ENCODE measurements at regions of chr1 and their contacts with region 1.

Region 1: DNA sequence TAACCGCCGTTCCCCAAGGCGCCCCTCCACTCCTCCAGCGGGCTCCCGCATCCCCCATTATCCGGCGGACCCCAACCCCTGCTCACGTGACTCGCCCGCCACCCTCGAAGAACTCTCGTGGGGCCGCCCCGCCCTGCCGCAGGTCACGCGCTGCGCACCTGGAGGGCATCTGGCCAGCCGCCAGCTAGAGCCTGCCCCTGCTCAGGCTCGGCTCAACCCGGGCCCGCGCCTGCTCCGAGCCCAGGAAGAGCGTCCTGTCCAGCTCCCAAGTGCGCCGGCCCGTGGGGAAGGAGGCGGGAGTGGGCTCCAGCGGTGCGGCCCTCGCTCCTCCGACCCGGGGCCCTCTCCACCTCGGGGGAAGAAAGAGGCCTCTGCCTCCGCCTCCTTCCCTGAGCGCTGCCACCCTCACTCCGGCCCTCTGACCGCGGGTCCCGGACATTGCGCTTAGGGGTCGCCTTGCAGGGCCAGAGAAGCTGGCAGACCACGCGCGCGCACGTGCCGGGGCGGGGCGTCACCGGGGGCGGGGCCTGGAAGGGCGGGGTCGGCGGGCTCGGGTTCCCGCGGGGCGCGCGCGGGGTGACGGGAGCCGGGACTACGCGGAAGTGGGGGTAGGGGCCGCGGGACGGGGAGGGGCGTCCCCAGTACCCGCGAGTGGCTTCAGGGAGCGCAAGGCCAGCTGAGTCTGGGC is 28.4 kb downstream of the HMGN2 start:
- DNase-seq: peak; percentile 85
- H3K27ac ChIP-seq: peak overlapping the region; percentile 97
- CTCF ChIP-seq: peak; percentile 55; the same call in 1 of the 2 replicates

Region 2: GRCh38 chr1:26417111-26417759 is 83.4 kb before region 1 on chr1:
- CTCF ChIA-PET with region 1: no interaction called
- POLR2A ChIA-PET with region 1: no interaction called
- DNase-seq: peak; percentile 73
- H3K27ac ChIP-seq: no peak overlapping the region
- CTCF ChIP-seq: peak; percentile 86

Region 3: GRCh38 chr1:26490158-26490557 is 10.5 kb before region 1 on chr1:
- CTCF ChIA-PET with region 1: interaction called, 13 read pairs
- POLR2A ChIA-PET with region 1: no interaction called
- DNase-seq: no peak
- H3K27ac ChIP-seq: no peak overlapping the region
- CTCF ChIP-seq: no peak

Region 4: DNA sequence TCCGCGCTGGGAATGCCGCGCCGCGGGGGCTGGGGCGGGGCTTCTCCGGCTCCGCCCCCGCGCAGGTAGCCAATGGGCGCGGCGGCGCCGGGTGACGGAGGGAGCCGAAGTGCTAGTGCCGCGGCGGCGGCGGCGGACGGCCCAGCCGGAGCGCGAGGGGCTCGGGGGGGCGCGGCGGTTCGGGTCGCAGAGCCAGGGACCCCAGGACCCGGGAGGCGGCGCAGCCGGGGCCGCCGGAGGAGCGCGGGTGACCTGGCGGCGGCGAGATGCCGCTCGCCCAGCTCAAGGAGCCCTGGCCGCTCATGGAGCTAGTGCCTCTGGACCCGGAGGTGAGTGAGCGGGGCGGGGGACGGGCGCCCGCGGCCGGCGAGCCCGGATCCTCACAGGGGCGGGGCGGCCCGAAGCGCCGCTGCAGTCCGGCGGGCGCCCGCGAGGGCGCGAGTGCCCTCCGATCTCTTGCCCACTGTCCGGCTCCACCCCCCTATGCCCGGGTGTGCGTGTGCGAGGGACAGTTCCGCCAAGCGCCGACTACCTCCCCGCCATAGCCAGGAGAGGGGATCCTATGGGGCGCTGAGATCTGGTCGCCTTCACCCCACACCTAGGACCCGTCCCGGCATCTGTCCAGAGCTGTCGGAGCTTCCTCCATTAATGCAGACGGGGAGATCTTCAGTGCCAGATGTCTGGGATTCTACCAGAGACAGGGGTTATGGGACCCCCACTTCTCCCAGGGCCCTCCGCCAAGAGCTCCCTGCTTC is 29.2 kb after region 1 on chr1 and contains the start of gene RPS6KA1:
- CTCF ChIA-PET with region 1: interaction called, 26 read pairs
- POLR2A ChIA-PET with region 1: interaction called, 23 read pairs
- DNase-seq: peak; percentile 87
- H3K27ac ChIP-seq: peak within 1 kb of the TSS; percentile 98
- CTCF ChIP-seq: no peak

Region 5: DNA sequence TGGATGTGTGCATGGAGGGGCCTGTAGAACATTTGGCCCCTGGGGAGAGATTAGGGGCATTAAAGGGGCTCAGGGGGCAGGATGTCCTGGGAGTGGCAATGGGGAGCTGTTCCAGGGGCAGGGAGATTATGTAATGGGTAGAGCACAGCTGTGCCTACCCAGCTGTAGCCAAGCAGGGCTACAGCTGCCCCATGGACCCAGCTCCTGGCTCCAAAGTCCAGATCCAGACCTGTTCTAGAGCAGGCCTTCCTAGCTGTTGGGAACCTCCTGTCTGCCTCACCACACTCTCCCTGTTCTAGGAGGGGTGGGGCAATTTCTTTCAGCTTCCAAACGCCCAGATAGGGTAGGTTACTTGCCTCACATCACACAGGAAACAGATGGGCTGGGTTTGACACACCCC is 34.6 kb after region 1 on chr1:
- CTCF ChIA-PET with region 1: interaction called, 26 read pairs
- POLR2A ChIA-PET with region 1: interaction called, 23 read pairs
- DNase-seq: no peak
- H3K27ac ChIP-seq: peak overlapping the region; percentile 46
- CTCF ChIP-seq: no peak

Region 6: GRCh38 chr1:26541816-26542711 is 41.4 kb after region 1 on chr1:
- CTCF ChIA-PET with region 1: interaction called, 12 read pairs
- POLR2A ChIA-PET with region 1: no interaction called
- DNase-seq: peak; percentile 47
- H3K27ac ChIP-seq: peak overlapping the region; percentile 90
- CTCF ChIP-seq: no peak